Vagina (tissue), 2 donors: ENCODE measurements at regions of chr12 and their contacts with region 1.

Region 1: DNA sequence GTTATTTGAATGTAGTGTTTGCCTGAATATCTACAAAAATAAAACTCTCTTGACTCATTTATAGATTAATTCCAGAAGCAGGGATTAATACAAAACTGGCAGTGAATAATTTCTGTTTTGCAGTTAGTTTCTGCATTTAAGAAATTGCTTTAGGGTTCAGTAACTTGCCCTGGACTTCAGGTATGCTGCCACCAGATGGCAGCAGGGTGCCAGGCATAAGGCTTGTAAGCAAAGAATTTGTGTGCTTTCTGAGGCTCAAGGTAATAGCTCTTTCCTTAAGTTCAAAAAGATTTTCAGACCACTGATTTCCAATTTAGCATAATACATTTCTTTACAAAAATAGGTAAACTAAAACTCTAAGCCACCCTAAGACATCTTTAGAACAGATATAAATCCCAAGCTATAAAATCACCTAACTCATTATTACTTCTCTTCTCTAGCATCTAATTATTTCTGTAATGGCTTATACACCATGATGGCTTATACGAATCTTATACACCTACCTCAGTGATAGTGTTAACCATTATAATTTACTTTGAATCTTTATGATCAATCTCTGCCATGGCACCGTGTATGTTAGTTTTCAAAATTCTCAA is 398.3 kb downstream of the APAF1 start:
- DNase-seq: no peak
- H3K4me3 ChIP-seq: no peak overlapping the region
- H3K27ac ChIP-seq: no peak overlapping the region
- H3K4me1 ChIP-seq: no peaks in the 10 kb centered on the region
- H3K27me3 ChIP-seq: no peaks in the 10 kb centered on the region
- CTCF ChIP-seq: peak; percentile 44 to 77 (median 56)
- POLR2A ChIP-seq: no peak

Region 2: DNA sequence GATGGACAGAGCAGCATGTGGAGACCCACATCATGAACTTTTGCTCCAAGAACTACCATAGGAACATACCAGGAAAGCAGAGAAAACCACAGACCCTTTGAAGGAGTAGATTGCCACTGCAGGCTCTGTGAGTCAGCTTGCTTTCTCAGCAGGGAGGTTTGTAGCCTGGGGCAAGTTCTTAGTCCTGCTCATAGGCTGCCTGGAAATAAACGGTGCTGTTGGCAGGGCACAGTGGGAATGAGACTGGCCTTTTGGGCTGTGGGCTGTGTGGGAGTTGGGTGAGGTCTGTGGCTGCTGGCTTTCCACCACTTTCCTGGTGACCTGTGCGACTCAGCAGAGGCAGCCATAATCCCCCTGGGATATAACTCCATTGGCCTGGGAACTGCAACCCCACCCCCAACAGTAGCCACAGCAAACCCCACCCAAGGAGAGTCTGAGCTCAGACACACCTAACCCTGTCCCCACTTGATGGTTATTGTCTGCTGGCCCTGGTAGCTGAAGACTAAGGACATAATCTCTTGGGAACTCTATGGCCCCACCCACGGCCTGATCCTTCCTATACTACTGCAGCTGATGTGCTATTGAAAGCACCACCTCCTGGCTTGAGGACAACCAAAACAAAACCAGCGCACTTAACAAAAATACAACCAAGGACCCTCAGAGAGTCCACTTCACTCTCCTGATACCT is 412.1 kb after region 1 on chr12:
- intact Hi-C with region 1: no loop called
- DNase-seq: no peak
- H3K4me3 ChIP-seq: no peak overlapping the region
- H3K27ac ChIP-seq: no peak overlapping the region
- H3K4me1 ChIP-seq: peaks cover 12% of the 10 kb centered on the region
- H3K27me3 ChIP-seq: no peaks in the 10 kb centered on the region
- CTCF ChIP-seq: no peak
- POLR2A ChIP-seq: no peak

Region 3: DNA sequence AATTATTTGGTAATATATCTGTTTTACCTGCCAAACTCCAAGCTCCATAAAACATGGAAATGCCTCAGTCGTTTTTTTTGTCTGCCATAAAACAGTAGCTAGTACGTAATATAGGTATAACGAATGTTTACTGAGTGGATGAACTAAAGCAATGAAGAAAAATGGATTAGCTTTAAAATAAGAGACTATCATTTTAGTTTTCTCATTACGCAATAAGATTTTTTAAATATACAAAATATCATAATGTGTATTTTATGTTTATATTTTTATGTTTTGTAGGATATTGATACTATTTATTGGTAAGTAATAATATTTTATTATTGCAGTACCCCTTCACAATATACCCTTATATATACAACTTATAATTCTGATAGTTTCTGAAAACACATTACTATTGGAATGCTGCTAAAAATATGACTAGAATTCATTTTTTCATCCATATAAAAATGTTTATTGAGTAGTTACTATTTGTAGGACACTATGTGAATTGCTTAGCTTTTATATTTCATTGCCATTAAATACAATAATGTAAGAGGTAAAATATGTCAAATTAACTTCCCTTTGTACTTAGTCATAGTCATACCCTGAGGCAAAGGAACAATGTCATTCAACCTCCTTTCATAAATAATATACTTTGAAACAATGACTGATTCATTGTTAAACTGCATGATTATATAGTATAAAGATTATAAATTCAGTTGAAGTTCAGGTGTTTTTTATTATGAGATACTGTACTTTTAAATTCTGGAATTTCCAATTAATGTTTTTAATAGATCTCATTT is 709.1 kb after region 1 on chr12:
- intact Hi-C with region 1: loop called (anchors 10 kb)
- DNase-seq: no peak
- H3K4me3 ChIP-seq: no peak overlapping the region
- H3K27ac ChIP-seq: no peak overlapping the region
- H3K4me1 ChIP-seq: no peaks in the 10 kb centered on the region
- H3K27me3 ChIP-seq: no peaks in the 10 kb centered on the region
- CTCF ChIP-seq: no peak
- POLR2A ChIP-seq: no peak